ENCODE measurements at regions of chr3 and their contacts with region 1.

Region 1: DNA sequence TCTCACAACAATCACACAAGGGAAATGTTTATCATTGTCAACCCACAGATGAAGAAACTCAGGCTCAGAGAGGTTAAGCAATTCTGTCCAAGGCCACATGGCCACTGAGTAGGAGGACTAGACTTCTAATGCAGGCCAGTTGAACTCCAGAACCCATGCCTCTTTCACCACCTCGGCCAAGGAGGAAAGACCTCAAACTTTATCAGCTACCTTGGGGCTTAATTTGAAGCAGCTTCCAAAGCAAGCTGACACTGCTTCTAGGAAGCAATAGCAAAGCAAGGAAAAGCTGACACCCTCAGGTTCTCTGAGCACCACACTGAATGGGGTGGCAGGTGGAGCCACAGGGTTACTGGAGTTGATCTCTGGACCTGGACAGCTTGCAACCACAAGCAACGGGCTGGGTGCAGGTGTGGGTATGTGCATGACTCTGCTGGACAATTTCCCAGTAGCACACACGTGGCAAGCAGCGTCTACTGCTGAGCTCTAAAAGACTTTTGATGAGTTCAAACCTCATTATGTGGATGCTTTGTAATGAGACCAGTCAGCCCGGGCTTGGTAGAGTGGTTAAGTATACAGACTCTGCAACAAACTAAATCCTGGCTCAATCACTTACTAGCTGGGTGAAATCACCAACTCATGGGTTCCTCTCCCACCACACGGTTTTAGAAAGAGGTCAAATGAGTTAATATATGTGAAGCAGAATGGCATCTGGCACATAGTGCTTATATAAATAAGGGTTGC is 23.1 kb downstream of the CCNL1 start:
- H3K4me3 ChIP-seq: no peak overlapping the region
- H3K27ac ChIP-seq: no peak overlapping the region
- H3K4me1 ChIP-seq: 0 out of 2 replicates have a peak, but pooled peaks cover 2% of the 10 kb centered on the region
- CTCF ChIP-seq: no peak

Region 2: GRCh38 chr3:156535162-156535627 is 601.6 kb before region 1 on chr3:
- CTCF ChIA-PET with region 1: interaction called, 15 read pairs
- POLR2A ChIA-PET with region 1: no interaction called
- H3K4me3 ChIP-seq: no peak overlapping the region
- H3K27ac ChIP-seq: no peak overlapping the region
- H3K4me1 ChIP-seq: no peaks in the 10 kb centered on the region
- CTCF ChIP-seq: no peak

Region 3: GRCh38 chr3:157151627-157152026 is 14.8 kb after region 1 on chr3:
- CTCF ChIA-PET with region 1: interaction called, 13 read pairs
- POLR2A ChIA-PET with region 1: interaction called, 3 read pairs
- H3K4me3 ChIP-seq: no peak overlapping the region
- H3K27ac ChIP-seq: no peak overlapping the region
- H3K4me1 ChIP-seq: 0 out of 2 replicates have a peak, but pooled peaks cover 6% of the 10 kb centered on the region
- CTCF ChIP-seq: no peak

Region 4: GRCh38 chr3:157159762-157160657 is 23.2 kb after region 1 on chr3 and contains the start of gene CCNL1:
- CTCF ChIA-PET with region 1: interaction called, 10 read pairs
- POLR2A ChIA-PET with region 1: interaction called, 3 read pairs
- H3K4me3 ChIP-seq: peak within 1 kb of the TSS; percentile 95
- H3K27ac ChIP-seq: peak within 1 kb of the TSS; percentile 82
- H3K4me1 ChIP-seq: peaks cover 9% of the 10 kb centered on the region
- CTCF ChIP-seq: no peak

Region 5: GRCh38 chr3:157201648-157202278 is 64.9 kb after region 1 on chr3:
- CTCF ChIA-PET with region 1: no interaction called
- POLR2A ChIA-PET with region 1: no interaction called
- H3K4me3 ChIP-seq: no peak overlapping the region
- H3K27ac ChIP-seq: no peak overlapping the region
- H3K4me1 ChIP-seq: no peaks in the 10 kb centered on the region
- CTCF ChIP-seq: no peak

Measured in HEK293 (cell line).